ENCODE measurements at regions of chr15 and their contacts with region 1.

Region 1: GRCh38 chr15:50134520-50135024 is 15.5 kb upstream of the ATP8B4 start:
- DNase-seq: no peak
- H3K4me3 Mint-ChIP-seq: peak overlapping the region; percentile 20
- H3K27ac Mint-ChIP-seq: peak overlapping the region; percentile 89
- H3K4me1 Mint-ChIP-seq: peaks cover 56% of the 10 kb centered on the region
- H3K27me3 Mint-ChIP-seq: no peaks in the 10 kb centered on the region

Region 2: DNA sequence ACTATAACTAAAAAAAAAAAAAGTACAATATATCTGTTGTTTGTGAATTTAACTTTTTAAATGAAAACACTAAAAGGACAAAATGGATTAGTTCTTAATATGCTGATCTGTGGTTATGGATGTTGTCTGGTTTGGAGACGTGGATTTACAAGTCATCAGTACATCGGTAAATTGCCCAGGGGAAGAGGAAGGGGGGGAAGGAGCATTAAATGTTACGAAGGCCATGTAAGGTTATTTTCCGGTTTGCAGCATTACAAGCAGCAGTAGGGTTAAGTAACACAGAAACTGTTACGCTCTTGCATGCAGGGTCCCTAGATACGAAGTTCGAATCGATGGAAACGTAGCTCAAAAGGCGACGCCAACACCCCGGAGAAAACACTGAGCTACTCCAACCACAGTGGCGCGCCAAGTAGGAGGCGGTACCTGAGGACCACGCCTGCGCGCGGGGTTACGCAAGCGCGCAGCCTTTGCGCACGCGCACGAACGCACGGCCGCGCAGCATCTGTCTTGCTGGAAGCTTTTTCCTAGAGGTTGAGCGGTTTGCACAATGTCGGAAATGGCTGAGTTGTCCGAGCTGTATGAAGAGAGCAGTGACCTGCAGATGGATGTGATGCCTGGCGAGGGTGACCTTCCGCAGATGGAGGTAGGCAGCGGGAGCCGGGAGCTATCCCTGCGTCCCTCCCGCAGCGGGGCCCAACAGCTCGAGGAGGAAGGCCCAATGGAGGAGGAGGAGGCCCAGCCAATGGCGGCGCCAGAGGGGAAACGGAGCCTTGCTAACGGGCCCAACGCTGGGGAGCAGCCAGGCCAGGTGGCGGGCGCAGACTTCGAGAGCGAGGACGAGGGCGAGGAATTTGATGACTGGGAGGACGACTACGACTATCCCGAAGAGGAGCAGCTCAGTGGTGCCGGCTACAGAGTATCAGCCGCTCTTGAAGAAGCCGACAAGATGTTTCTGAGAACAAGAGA is 1256.7 kb before region 1 on chr15 and contains the start of gene EID1:
- intact Hi-C with region 1: loop called (anchors 2 kb)
- DNase-seq: peak; percentile 94
- H3K4me3 Mint-ChIP-seq: peak within 1 kb of the TSS; percentile 99
- H3K27ac Mint-ChIP-seq: peak within 1 kb of the TSS; percentile 97
- H3K4me1 Mint-ChIP-seq: peaks cover 69% of the 10 kb centered on the region
- H3K27me3 Mint-ChIP-seq: no peaks in the 10 kb centered on the region
- total RNA-seq, gene EID1: 177 and 183 TPM in 2 replicates

Region 3: GRCh38 chr15:49282366-49282765 is 852.2 kb before region 1 on chr15:
- intact Hi-C with region 1: loop called (anchors 1 kb)
- DNase-seq: no peak
- H3K4me3 Mint-ChIP-seq: no peak overlapping the region
- H3K27ac Mint-ChIP-seq: no peak overlapping the region
- H3K4me1 Mint-ChIP-seq: peaks cover 24% of the 10 kb centered on the region
- H3K27me3 Mint-ChIP-seq: no peaks in the 10 kb centered on the region

Region 4: DNA sequence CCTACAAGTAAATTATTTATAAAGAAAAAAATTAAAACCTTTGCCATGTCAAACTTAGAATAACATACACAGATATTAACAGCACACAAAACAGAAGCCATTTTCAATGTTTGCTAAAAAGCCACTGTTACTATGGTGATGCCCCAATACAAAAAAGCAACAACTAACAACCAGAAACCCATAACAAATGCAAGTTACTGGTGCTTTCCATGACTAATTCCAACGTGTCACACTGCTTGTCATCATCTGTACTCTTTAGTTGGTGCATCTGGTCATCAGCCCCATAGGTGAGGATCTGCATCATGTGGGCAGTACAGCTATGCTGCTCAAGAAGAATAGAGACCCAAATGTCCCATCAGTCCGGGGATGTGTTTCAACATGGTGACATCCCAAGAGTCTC is 68.4 kb before region 1 on chr15:
- intact Hi-C with region 1: loop called (anchors 1 kb)
- DNase-seq: peak; percentile 44
- H3K4me3 Mint-ChIP-seq: peak overlapping the region; percentile 45
- H3K27ac Mint-ChIP-seq: peak overlapping the region; percentile 92
- H3K4me1 Mint-ChIP-seq: peaks cover 62% of the 10 kb centered on the region
- H3K27me3 Mint-ChIP-seq: no peaks in the 10 kb centered on the region

Region 5: GRCh38 chr15:50176869-50177268 is 42.3 kb after region 1 on chr15:
- intact Hi-C with region 1: loop called (anchors 1 kb)
- DNase-seq: no peak
- H3K4me3 Mint-ChIP-seq: no peak overlapping the region
- H3K27ac Mint-ChIP-seq: no peak overlapping the region
- H3K4me1 Mint-ChIP-seq: peaks cover 38% of the 10 kb centered on the region
- H3K27me3 Mint-ChIP-seq: no peaks in the 10 kb centered on the region

Region 6: GRCh38 chr15:50260969-50261496 is 126.5 kb after region 1 on chr15:
- intact Hi-C with region 1: loop called (anchors 1 kb)
- DNase-seq: no peak
- H3K4me3 Mint-ChIP-seq: peak overlapping the region; percentile 66
- H3K27ac Mint-ChIP-seq: peak overlapping the region; percentile 98
- H3K4me1 Mint-ChIP-seq: peaks cover 79% of the 10 kb centered on the region
- H3K27me3 Mint-ChIP-seq: no peaks in the 10 kb centered on the region